ENCODE measurements at regions of chr4 and their contacts with region 1.

Region 1: DNA sequence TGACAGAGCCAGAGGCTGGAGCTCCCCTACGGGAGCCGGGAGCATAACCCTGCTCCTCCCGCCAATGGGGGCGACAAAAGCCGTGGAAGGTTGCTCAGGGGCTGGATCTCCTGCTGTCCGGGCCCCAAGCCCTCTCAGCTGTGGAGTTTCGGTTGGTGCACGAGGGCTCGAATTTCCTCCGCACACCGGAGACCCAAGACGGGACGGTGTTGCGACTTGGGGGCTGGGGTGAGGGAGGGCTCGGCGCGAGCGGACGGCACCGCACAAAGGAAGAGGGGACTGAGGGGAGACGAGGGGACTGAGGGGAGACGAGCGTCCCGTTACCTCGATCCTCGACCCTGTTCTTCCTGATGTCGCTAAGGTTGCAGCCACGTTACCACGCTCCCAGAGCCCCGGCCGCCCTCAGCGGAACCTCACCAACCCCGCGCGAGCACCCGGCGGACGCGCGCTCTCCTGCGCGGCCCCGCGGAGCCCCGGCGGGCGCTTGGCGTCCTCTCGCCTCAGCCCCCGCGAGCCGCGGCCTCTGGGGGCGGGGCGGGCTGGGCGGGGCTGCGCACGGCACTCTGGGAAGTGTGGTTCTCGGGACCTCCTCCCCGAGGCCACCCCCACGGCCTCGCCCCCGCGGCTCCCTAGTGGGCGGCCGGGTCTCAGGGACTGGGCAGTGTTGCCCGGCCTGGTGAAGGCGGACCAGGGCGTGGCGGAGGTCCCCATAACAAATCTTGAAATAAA is at the start of gene KLHL8:
- DNase-seq: peak; percentile 87
- H3K4me3 ChIP-seq: peak within 1 kb of the TSS; percentile 54 to 100 (median 98)
- H3K27ac ChIP-seq: peak within 1 kb of the TSS; percentile 66
- H3K4me1 ChIP-seq: peaks cover 5% of the 10 kb centered on the region
- H3K27me3 ChIP-seq: no peaks in the 10 kb centered on the region
- CTCF ChIP-seq: peak in 1 of 2 donors; percentile 11
- total RNA-seq, gene KLHL8: 6.5 to 10.8 TPM

Region 2: DNA sequence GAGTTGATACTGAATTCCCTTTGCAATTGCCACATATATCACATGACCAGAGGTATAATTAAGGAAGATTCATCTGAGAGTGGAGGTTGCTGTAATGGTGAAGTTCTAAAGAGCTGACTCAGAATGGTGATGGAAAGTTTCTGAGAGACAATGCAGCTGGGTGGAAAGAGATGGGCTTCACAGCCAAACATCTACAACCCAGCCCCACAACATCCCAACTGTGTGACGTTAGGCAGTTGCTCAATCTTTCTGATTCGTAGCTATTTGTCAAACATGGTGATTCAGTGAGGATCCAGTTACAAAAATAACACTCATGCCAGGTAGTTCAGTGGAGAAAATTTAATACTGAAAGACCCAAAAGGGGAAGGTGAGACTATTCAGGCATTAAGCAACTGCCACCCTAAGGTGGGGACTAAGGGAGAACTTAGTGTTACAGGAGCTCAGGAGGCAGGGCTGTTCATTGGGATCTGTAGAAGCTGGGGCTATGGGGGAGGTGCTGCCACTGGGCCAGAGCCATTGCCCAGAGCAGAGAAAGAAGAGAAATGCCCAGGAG is 292.3 kb before region 1 on chr4:
- CTCF ChIA-PET with region 1: no interaction called
- dilution Hi-C with region 1: no loop called
- in situ Hi-C with region 1: loop called in 1 of 2 experiments (anchors 25 kb)
- intact Hi-C with region 1: loop called (anchors 5 kb)
- DNase-seq: peak; percentile 99
- H3K4me3 ChIP-seq: no peak overlapping the region
- H3K27ac ChIP-seq: peak overlapping the region; percentile 97
- H3K4me1 ChIP-seq: peaks cover 43% of the 10 kb centered on the region
- H3K27me3 ChIP-seq: no peaks in the 10 kb centered on the region
- CTCF ChIP-seq: no peak

Region 3: GRCh38 chr4:87150498-87151261 is 69.6 kb before region 1 on chr4:
- CTCF ChIA-PET with region 1: no interaction called
- dilution Hi-C with region 1: no loop called
- in situ Hi-C with region 1: no loop called
- intact Hi-C with region 1: loop called (anchors 1 kb)
- DNase-seq: peak; percentile 64
- H3K4me3 ChIP-seq: no peak overlapping the region
- H3K27ac ChIP-seq: no peak overlapping the region
- H3K4me1 ChIP-seq: no peaks in the 10 kb centered on the region
- H3K27me3 ChIP-seq: no peaks in the 10 kb centered on the region
- CTCF ChIP-seq: peak; percentile 82 to 99